ENCODE measurements at regions of chr20 and their contacts with region 1.

Region 1: DNA sequence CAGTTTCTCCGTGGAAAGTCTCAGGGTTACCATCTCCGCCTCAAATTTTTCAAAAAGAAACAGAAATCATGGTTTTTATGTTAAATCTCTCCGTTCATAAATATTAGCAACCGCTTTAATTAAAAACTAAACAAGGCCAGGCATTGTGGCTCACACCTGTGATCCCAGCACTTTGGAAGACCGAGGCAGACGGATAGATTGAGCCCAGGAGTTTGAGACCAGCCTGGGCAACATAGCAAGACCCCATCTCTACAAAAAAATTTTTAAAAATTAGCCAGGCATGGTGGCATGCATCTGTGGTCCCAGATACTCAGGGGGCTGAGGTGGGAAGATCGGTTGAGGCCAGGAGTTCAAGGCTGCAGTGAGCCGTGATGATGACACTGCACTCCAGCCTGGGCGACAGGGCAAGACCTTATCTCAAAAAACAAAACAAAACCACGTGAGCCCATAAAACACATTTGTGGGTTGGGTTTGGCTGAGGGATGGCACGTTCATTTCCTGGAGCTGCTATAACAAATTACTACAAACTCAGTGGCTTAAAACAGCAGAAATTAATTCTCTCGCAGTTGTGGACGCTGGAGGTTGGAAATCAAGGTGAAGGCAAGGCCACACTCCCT is 223.2 kb downstream of the ZNF217 start:
- DNase-seq: no peak
- H3K4me3 ChIP-seq: no peak overlapping the region
- CTCF ChIP-seq: no peak

Region 2: DNA sequence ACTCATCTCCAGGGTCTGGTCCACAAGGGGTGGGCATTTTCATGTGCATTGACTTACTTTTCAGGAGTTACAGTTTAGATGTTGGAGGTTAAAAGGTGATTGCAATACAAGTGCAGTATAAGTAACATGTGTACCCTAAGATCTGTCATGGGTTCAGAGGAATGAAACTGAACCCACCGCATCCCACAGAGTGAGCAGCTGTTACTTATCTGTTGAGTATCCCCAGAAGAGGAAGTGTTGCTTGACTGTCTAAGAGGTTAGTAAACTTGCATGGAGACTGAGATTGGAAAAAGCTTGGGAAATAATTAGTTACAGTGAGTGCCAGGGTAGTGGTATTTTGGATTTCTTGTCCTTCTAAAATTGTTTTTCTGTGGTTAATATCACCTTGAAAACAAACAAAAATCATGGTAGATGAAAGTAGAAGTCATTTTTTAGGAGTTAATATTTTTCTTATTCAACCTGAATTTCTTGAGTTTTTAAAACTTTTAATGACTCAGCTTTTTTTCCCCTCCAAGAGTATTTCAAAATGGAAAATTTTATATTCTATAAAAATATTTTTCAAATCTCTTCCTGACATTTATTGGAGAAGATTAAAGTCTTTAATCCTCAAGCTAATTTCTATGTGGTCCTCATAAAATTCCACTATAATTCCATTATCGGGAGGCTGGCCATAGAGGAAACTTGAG is 83.0 kb before region 1 on chr20:
- in situ Hi-C with region 1: loop called (anchors 5 kb)
- DNase-seq: no peak
- H3K4me3 ChIP-seq: no peak overlapping the region
- CTCF ChIP-seq: no peak